ENCODE measurements at regions of chr16 and their contacts with region 1.

Region 1: DNA sequence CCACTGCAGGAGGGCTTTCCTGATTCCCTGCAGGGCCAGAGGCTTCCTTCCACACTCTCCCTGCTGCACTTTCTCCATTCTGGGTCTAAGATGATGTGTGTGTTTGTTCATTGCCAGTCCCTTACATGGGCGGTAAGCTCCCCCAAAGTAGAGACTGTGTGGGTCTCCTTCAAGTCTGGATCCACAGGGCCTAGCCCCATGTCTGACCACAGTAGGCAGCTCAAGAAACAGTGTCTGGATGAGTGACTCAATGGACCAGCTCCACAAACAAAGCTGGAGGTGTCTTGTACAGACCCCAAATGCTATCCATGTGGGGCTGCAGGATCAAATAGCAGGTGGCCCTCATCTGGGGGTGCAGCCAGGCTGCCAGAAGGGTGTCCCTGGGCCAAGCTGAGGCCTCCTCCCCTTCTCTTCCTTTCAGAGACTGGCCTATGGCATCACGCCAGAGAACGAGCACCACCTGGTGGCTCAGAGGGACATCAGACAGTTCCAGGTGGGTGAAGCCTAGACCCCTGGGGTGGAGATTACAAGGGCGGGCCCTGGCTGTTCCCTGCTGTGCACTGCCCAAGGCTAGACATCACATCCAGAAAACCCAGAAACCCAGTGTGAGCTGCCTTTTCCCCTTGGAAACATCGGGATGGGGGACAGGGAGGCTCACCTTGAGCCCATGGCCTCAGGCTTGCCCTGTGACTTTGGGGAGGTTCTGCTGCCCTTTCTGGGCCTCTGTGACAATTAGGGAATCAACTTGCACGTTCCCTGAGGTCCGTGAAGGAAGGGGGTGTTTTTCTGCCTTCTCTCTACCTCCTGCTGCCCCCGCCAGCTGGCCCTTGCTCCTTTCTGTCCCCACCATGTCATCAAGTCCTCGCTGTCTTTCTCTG is 45.9 kb downstream of the SLC6A2 start:
- DNase-seq: peak; percentile 46 to 79 (median 60)
- ATAC-seq: peak in 3 of 4 donors; percentile 65 to 84 (median 77)
- H3K4me3 ChIP-seq: no peak overlapping the region
- H3K27ac ChIP-seq: no peak overlapping the region
- H3K4me1 ChIP-seq: peaks cover 0 to 3% (median 0%) of the 10 kb centered on the region in 12 donors
- H3K27me3 ChIP-seq: peaks cover 0 to 6% (median 0%) of the 10 kb centered on the region in 9 donors
- CTCF ChIP-seq: peak; percentile 45 to 73 (median 59)
- POLR2A ChIP-seq: no peak

Region 2: GRCh38 chr16:53945996-53946395 is 1755.7 kb before region 1 on chr16:
- intact Hi-C with region 1: loop called in 1 of 10 experiments (anchors 10 kb)
- DNase-seq: no peak
- ATAC-seq: peak in 3 of 4 donors; percentile 60 to 76 (median 71)
- H3K4me3 ChIP-seq: no peak overlapping the region
- H3K27ac ChIP-seq: no peak overlapping the region
- H3K4me1 ChIP-seq: peaks cover 0 to 8% (median 0%) of the 10 kb centered on the region in 12 donors
- H3K27me3 ChIP-seq: no peaks in the 10 kb centered on the region
- CTCF ChIP-seq: peak; percentile 51 to 78 (median 72)
- POLR2A ChIP-seq: no peak

Region 3: GRCh38 chr16:55465077-55465896 is 236.4 kb before region 1 on chr16:
- intact Hi-C with region 1: loop called (anchors 1 to 2 kb)
- DNase-seq: peak; percentile 82 to 90 (median 86)
- ATAC-seq: peak; percentile 84 to 95 (median 90)
- H3K4me3 ChIP-seq: peak overlapping the region in 1 of 12 donors; percentile 21
- H3K27ac ChIP-seq: no peak overlapping the region
- H3K4me1 ChIP-seq: peaks cover 0 to 5% (median 0%) of the 10 kb centered on the region in 12 donors
- H3K27me3 ChIP-seq: no peaks in the 10 kb centered on the region
- CTCF ChIP-seq: peak; percentile 99 to 100 (median 100)
- POLR2A ChIP-seq: no peak

Region 4: DNA sequence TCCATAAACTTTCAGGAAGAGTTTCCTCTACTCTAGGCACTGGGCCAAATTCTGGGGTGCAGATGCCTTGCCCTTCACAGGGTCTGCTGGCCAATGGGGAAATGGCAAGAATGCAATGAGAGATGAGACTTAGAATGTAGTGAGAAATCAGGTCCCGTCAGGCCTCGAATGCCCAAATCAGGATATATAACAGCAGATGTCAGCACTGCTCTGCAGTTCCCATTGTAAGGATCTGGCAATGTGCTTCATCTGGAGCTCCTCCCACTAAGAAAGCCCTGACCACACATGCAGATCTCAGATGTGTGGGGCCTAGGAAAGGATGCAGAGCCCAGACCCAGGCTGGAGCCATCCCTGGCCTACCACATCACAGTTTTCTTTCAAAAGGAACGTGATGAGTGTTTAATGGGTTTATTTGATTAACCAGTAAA is 206.7 kb before region 1 on chr16:
- intact Hi-C with region 1: loop called in 8 of 10 experiments (anchors 2 to 10 kb)
- DNase-seq: peak in 2 of 5 donors; percentile 52 to 58
- ATAC-seq: peak; percentile 67 to 93 (median 74)
- H3K4me3 ChIP-seq: no peak overlapping the region
- H3K27ac ChIP-seq: no peak overlapping the region
- H3K4me1 ChIP-seq: peaks cover 0 to 34% (median 10%) of the 10 kb centered on the region in 12 donors
- H3K27me3 ChIP-seq: no peaks in the 10 kb centered on the region
- CTCF ChIP-seq: peak in 11 of 12 donors; percentile 27 to 67 (median 46)
- POLR2A ChIP-seq: no peak

Region 5: DNA sequence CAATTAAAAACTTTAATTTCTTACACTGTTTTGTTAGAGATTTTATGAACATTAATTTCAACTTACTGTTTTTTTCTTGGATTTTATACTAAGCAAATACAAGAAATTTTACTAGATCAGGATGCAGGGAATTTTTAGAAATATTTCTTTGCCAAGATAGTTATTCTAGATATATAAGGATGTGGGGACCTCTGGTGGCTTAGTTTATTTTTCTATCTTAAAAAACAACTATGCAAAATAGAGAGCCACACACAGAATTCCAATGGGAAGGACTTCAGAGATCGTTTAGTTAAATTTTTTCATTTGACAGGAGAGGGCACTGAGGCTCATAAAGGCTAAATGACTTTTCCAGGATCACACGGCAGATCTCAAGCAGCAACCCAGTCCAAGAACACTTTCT is 158.2 kb before region 1 on chr16:
- intact Hi-C with region 1: loop called (anchors 5 to 10 kb)
- DNase-seq: no peak
- ATAC-seq: peak in 1 of 4 donors; percentile 67
- H3K4me3 ChIP-seq: no peak overlapping the region
- H3K27ac ChIP-seq: no peak overlapping the region
- H3K4me1 ChIP-seq: peaks cover 0 to 24% (median 0%) of the 10 kb centered on the region in 12 donors
- H3K27me3 ChIP-seq: no peaks in the 10 kb centered on the region
- CTCF ChIP-seq: peak in 11 of 12 donors; percentile 20 to 69 (median 39)
- POLR2A ChIP-seq: no peak

Region 6: DNA sequence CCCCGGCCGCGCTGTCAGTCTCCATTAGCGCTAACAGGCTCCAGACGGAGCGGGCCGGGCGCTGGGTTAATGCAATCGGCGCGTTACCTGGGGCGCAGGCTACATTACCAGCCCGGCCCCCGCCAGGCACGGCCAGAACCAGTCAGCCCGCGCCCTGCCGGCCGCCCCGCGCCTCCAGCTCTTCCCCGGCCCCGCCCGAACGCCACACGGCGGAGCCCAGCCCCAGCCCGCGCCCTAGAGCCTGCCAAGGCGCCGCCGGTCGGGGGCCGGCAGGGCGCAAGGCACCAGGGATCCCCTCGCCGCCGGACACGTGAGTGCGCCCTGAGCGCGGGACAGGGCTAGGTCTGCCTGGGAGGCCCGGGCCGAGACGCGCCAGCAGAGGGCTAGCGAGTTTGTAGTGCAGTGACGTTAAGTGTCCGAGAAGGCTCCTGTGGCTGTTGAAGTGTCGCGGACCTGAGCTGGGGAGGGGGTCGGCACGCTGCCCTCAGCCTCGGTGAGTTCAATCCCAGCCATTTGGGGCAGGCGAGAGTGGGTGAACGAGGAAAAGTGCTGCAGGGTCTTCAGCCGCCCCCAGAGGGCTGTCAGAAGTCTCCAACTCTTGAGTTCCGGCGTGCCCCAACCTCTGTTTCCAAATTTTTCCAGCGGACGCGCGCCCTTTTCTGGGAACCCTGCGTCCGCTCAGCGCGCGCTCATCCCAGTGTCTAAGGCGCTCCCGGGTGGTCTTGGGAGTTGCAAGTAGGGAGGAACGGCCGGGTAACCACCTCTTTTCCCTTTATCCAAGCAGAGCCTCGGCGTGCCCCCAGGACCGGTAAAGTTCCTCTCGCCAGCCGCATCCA is 45.6 kb before region 1 on chr16 and contains the start of gene SLC6A2:
- intact Hi-C with region 1: loop called in 1 of 10 experiments (anchors 5 kb)
- DNase-seq: peak in 1 of 5 donors; percentile 41
- ATAC-seq: peak in 3 of 4 donors; percentile 47 to 73 (median 49)
- H3K4me3 ChIP-seq: peak within 1 kb of the TSS; percentile 9 to 46 (median 30)
- H3K27ac ChIP-seq: no peak within 1 kb of the TSS
- H3K4me1 ChIP-seq: peaks cover 0 to 17% (median 7%) of the 10 kb centered on the region in 12 donors
- H3K27me3 ChIP-seq: peaks cover 20 to 68% (median 43%) of the 10 kb centered on the region in 9 donors
- CTCF ChIP-seq: peak in 2 of 12 donors; percentile 21 to 28
- POLR2A ChIP-seq: no peak
- total RNA-seq, gene SLC6A2: 0.18 TPM in 1 of 9 donors, not detected in the others

Measured in heart left ventricle (tissue), 16 donors.